Upper lobe of right lung (tissue), 1 donor: ENCODE measurements at regions of chr3 and their contacts with region 1.

Region 1: GRCh38 chr3:137845194-137845593 is 81.1 kb downstream of the SOX14 start:
- DNase-seq: no peak
- ATAC-seq: no peak
- H3K4me3 ChIP-seq: no peak overlapping the region
- H3K27ac ChIP-seq: no peak overlapping the region
- H3K4me1 ChIP-seq: no peaks in the 10 kb centered on the region
- H3K27me3 ChIP-seq: no peaks in the 10 kb centered on the region
- CTCF ChIP-seq: no peak

Region 2: GRCh38 chr3:136979684-136980083 is 865.5 kb before region 1 on chr3:
- intact Hi-C with region 1: loop called (anchors 5 kb)
- DNase-seq: no peak
- ATAC-seq: no peak
- H3K4me3 ChIP-seq: no peak overlapping the region
- H3K27ac ChIP-seq: no peak overlapping the region
- H3K4me1 ChIP-seq: no peaks in the 10 kb centered on the region
- H3K27me3 ChIP-seq: no peaks in the 10 kb centered on the region
- CTCF ChIP-seq: no peak

Region 3: GRCh38 chr3:137992592-137992991 is 147.4 kb after region 1 on chr3:
- intact Hi-C with region 1: no loop called
- DNase-seq: no peak
- ATAC-seq: no peak
- H3K4me3 ChIP-seq: no peak overlapping the region
- H3K27ac ChIP-seq: no peak overlapping the region
- H3K4me1 ChIP-seq: no peaks in the 10 kb centered on the region
- H3K27me3 ChIP-seq: no peaks in the 10 kb centered on the region
- CTCF ChIP-seq: no peak

Region 4: GRCh38 chr3:138078096-138078495 is 232.9 kb after region 1 on chr3:
- intact Hi-C with region 1: no loop called
- DNase-seq: no peak
- ATAC-seq: no peak
- H3K4me3 ChIP-seq: no peak overlapping the region
- H3K27ac ChIP-seq: no peak overlapping the region
- H3K4me1 ChIP-seq: no peaks in the 10 kb centered on the region
- H3K27me3 ChIP-seq: no peaks in the 10 kb centered on the region
- CTCF ChIP-seq: no peak